Breast epithelium (tissue), 4 donors: ENCODE measurements at regions of chr3 and their contacts with region 1.

Region 1: GRCh38 chr3:168574455-168575158 is 478.9 kb upstream of the GOLIM4 start:
- DNase-seq: no peak
- H3K4me3 ChIP-seq: no peak overlapping the region
- H3K27ac ChIP-seq: no peak overlapping the region
- H3K4me1 ChIP-seq: no peaks in the 10 kb centered on the region
- H3K27me3 ChIP-seq: no peaks in the 10 kb centered on the region
- CTCF ChIP-seq: no peak
- POLR2A ChIP-seq: no peak

Region 2: GRCh38 chr3:168088106-168088720 is 486.4 kb before region 1 on chr3:
- intact Hi-C with region 1: no loop called
- DNase-seq: no peak
- H3K4me3 ChIP-seq: no peak overlapping the region
- H3K27ac ChIP-seq: no peak overlapping the region
- H3K4me1 ChIP-seq: no peaks in the 10 kb centered on the region
- H3K27me3 ChIP-seq: no peaks in the 10 kb centered on the region
- CTCF ChIP-seq: no peak
- POLR2A ChIP-seq: no peak

Region 3: DNA sequence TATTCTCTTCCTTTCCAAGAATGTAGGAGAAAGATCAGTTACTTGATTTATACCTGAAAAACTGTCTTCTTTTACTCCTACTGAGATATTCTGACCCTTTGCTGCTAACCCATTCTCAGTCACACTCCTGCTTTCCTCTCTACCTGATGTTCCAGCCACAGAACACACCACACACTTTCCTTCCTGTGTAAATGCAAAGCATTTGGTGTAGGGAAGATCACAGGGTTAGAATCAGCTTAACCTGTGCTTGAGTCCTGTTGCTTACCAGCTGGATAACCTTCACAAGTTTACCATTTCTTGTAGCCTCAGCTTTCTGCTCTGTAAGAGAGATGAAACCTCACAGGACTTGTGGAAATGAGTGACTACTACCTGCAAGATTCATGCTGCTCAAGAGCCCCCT is 10.9 kb after region 1 on chr3:
- intact Hi-C with region 1: loop called (anchors 1 kb)
- DNase-seq: no peak
- H3K4me3 ChIP-seq: no peak overlapping the region
- H3K27ac ChIP-seq: no peak overlapping the region
- H3K4me1 ChIP-seq: no peaks in the 10 kb centered on the region
- H3K27me3 ChIP-seq: no peaks in the 10 kb centered on the region
- CTCF ChIP-seq: no peak
- POLR2A ChIP-seq: no peak